ENCODE measurements at regions of chr14 and their contacts with region 1.

Region 1: DNA sequence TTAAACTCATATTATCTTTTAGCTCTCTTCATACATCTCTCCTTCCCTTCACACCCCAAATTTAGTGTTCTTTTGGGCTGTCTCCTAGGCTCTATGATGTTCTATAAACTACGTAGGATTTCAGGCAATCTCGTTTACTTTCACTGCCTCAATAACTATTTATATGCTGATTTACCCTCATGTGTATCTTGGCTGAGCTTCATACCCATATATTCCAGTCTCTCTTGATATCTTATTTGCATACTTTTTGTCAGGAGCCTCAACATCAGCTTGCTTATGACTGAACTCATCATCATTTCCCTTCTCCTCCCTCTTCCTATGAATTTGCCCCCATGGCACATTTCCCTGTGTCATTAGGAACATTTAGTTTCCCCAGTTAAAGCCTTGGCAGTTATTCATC is 262.1 kb upstream of the FBXO33 start:
- DNase-seq: no peak
- H3K4me3 ChIP-seq: no peak overlapping the region
- H3K27ac ChIP-seq: no peak overlapping the region
- H3K4me1 ChIP-seq: no peaks in the 10 kb centered on the region
- H3K27me3 ChIP-seq: no peaks in the 10 kb centered on the region
- CTCF ChIP-seq: no peak
- EP300 ChIP-seq: no peak
- POLR2A ChIP-seq: no peak

Region 2: GRCh38 chr14:39731912-39732311 is 37.6 kb after region 1 on chr14:
- in situ Hi-C with region 1: no loop called
- intact Hi-C with region 1: loop called (anchors 2 kb)
- DNase-seq: no peak
- H3K4me3 ChIP-seq: no peak overlapping the region
- H3K27ac ChIP-seq: no peak overlapping the region
- H3K4me1 ChIP-seq: no peaks in the 10 kb centered on the region
- H3K27me3 ChIP-seq: no peaks in the 10 kb centered on the region
- CTCF ChIP-seq: no peak
- EP300 ChIP-seq: no peak
- POLR2A ChIP-seq: no peak

Region 3: GRCh38 chr14:39912192-39913100 is 218.1 kb after region 1 on chr14:
- in situ Hi-C with region 1: no loop called
- intact Hi-C with region 1: no loop called
- DNase-seq: no peak
- H3K4me3 ChIP-seq: no peak overlapping the region
- H3K27ac ChIP-seq: no peak overlapping the region
- H3K4me1 ChIP-seq: no peaks in the 10 kb centered on the region
- H3K27me3 ChIP-seq: no peaks in the 10 kb centered on the region
- CTCF ChIP-seq: no peak
- EP300 ChIP-seq: no peak
- POLR2A ChIP-seq: no peak